Right cardiac atrium (tissue), 5 donors: ENCODE measurements at regions of chr3 and their contacts with region 1.

Region 1: DNA sequence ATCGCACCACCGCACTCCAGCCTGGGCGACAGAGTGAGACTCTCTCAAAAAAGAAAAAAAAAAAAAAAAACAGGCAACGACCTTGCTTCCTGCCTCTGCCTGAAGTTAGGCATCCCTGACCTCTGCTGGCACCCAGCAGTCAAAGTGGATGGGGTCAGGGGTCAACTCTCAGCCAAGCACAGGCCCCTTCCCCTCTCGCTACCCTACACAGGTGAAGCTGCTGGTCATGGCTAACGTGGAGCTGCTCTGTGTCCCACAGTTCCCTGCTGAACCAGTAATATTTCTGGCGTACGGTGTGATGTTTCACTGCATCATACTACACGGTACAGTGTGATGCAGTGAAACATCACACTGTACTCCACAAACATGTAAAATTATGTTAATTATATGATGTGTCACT is 13.9 kb upstream of the FRG2C start:
- DNase-seq: no peak
- ATAC-seq: no peak
- H3K4me3 ChIP-seq: no peak overlapping the region
- H3K27ac ChIP-seq: no peak overlapping the region
- H3K4me1 ChIP-seq: no peaks in the 10 kb centered on the region
- H3K27me3 ChIP-seq: no peaks in the 10 kb centered on the region

Region 2: DNA sequence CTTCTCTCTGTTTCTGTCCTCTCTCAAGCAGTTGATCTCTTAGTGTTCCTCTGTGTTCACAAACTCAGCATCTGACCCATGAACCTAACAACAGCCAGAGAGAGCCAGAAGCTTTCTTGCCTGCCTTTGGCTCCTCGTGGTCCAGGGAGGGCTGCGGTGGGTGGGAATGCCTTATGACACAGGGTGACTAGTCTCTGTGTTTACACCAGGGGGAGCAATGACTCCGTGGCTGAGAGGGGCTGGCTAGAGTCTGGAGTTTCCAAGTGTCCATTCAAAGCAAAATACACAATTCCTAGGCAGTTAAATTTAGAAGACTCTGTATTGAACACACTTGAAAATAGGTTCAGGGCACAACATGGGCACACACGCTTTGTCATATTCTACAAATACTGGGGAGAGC is 356.1 kb before region 1 on chr3:
- intact Hi-C with region 1: loop called in 1 of 4 experiments (anchors 10 kb)
- DNase-seq: peak; percentile 35 to 71 (median 39)
- ATAC-seq: peak; percentile 98 to 99
- H3K4me3 ChIP-seq: no peak overlapping the region
- H3K27ac ChIP-seq: no peak overlapping the region
- H3K4me1 ChIP-seq: no peaks in the 10 kb centered on the region
- H3K27me3 ChIP-seq: no peaks in the 10 kb centered on the region